ENCODE measurements at regions of chr11 and their contacts with region 1.

Region 1: GRCh38 chr11:96254087-96254486 is 88.9 kb downstream of the MAML2 start:
- DNase-seq: no peak
- H3K4me3 Mint-ChIP-seq: peak overlapping the region; percentile 70
- H3K27ac Mint-ChIP-seq: peak overlapping the region; percentile 83
- H3K4me1 Mint-ChIP-seq: peaks cover 76% of the 10 kb centered on the region
- H3K27me3 Mint-ChIP-seq: no peaks in the 10 kb centered on the region

Region 2: DNA sequence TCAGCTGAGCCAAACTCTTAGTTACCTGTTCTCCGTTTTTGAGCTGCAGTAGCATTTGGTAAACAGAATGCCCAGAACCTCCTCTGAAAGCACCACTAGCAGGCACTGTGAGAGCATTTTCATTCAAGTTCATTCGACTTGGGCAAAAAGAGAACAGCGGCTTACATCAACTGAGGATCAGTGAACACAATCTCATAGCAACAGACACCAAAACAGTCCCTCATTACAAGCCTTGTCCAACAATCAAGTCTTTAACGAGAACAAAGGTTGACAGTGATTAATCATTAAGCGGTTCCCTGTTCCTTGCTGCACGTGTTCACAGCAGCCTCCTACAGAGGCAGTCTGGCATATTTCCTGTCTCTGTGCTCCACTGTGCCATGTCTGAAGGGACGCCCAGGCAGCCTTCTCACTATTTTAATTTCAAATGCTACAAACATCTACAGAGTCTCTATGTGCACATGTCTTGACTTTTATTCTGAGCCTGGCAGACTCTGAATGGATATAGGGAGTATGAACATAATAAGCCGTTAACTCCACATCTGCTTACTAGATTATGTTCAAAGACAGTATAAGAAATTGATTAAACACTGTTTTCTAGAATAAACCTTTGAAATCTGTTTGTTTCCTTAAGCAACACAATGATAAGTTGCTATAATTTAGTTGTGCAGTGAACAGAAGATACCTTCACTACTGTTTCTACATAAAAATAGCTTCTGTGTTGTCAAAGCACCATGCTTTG is 241.8 kb before region 1 on chr11:
- intact Hi-C with region 1: loop called (anchors 5 kb)
- DNase-seq: peak; percentile 34
- H3K4me3 Mint-ChIP-seq: peak overlapping the region; percentile 21
- H3K27ac Mint-ChIP-seq: peak overlapping the region; percentile 71
- H3K4me1 Mint-ChIP-seq: peaks cover 49% of the 10 kb centered on the region
- H3K27me3 Mint-ChIP-seq: no peaks in the 10 kb centered on the region

Region 3: GRCh38 chr11:96188243-96189006 is 65.7 kb before region 1 on chr11:
- intact Hi-C with region 1: loop called (anchors 2 kb)
- DNase-seq: peak; percentile 16
- H3K4me3 Mint-ChIP-seq: peak overlapping the region; percentile 9
- H3K27ac Mint-ChIP-seq: peak overlapping the region; percentile 75
- H3K4me1 Mint-ChIP-seq: peaks cover 62% of the 10 kb centered on the region
- H3K27me3 Mint-ChIP-seq: no peaks in the 10 kb centered on the region

Region 4: GRCh38 chr11:96242971-96243647 is 11.0 kb before region 1 on chr11:
- intact Hi-C with region 1: loop called (anchors 1 kb)
- DNase-seq: peak; percentile 74
- H3K4me3 Mint-ChIP-seq: peak overlapping the region; percentile 79
- H3K27ac Mint-ChIP-seq: peak overlapping the region; percentile 89
- H3K4me1 Mint-ChIP-seq: peaks cover 46% of the 10 kb centered on the region
- H3K27me3 Mint-ChIP-seq: no peaks in the 10 kb centered on the region

Region 5: GRCh38 chr11:96272529-96273222 is 18.6 kb after region 1 on chr11:
- intact Hi-C with region 1: loop called (anchors 1 kb)
- DNase-seq: no peak
- H3K4me3 Mint-ChIP-seq: no peak overlapping the region
- H3K27ac Mint-ChIP-seq: no peak overlapping the region
- H3K4me1 Mint-ChIP-seq: peaks cover 25% of the 10 kb centered on the region
- H3K27me3 Mint-ChIP-seq: no peaks in the 10 kb centered on the region

Region 6: GRCh38 chr11:96293598-96294021 is 39.5 kb after region 1 on chr11:
- intact Hi-C with region 1: loop called (anchors 2 kb)
- DNase-seq: no peak
- H3K4me3 Mint-ChIP-seq: peak overlapping the region; percentile 19
- H3K27ac Mint-ChIP-seq: peak overlapping the region; percentile 73
- H3K4me1 Mint-ChIP-seq: peaks cover 47% of the 10 kb centered on the region
- H3K27me3 Mint-ChIP-seq: no peaks in the 10 kb centered on the region

Region 7: DNA sequence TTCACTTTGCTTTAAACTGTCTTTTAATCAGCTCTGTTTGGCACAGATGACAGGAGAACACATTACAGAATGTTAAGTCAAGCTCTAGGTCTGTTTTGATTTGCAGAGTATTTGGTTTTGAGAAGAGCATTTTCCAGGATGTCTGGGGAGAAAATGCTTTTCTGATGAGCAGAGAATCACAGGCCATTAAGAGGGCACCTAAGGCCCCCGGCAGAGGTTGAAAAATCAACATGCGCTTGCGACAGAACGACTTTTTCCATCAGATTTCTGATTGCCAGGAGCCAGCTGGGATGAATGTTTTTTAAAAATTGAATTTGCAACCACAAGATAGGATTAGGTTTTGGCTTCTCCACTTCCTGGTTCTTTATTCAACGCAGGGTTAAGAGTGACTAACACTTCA is 440.3 kb after region 1 on chr11:
- intact Hi-C with region 1: no loop called
- DNase-seq: no peak
- H3K4me3 Mint-ChIP-seq: no peak overlapping the region
- H3K27ac Mint-ChIP-seq: no peak overlapping the region
- H3K4me1 Mint-ChIP-seq: no peaks in the 10 kb centered on the region
- H3K27me3 Mint-ChIP-seq: no peaks in the 10 kb centered on the region

Measured in activated T-helper 2 cell treated with anti-CD3 and anti-CD28 coated beads, Interferon-gamma antibody, Interleukin-2, Interleukin-4, amounts not matched to agents 10 μg/mL and 5 μg/mL and 100 μg/mL, durations not matched to agents 14 hours and 24 hours and 36 hours (primary cell).